ENCODE measurements at regions of chr12 and their contacts with region 1.

Region 1: GRCh38 chr12:26195641-26196420 is 458 bp downstream of the SSPN start:
- DNase-seq: peak; percentile 81
- H3K4me3 ChIP-seq: peak overlapping the region; percentile 42 to 76 (median 72)
- H3K27ac ChIP-seq: peak overlapping the region; percentile 89 to 94 (median 92)
- H3K4me1 ChIP-seq: peaks cover 0 to 45% (median 32%) of the 10 kb centered on the region in 4 donors
- H3K27me3 ChIP-seq: no peaks in the 10 kb centered on the region
- CTCF ChIP-seq: no peak
- EP300 ChIP-seq: no peak
- POLR2A ChIP-seq: no peak

Region 2: GRCh38 chr12:25970916-25971653 is 224.7 kb before region 1 on chr12:
- intact Hi-C with region 1: loop called (anchors 10 kb)
- DNase-seq: no peak
- H3K4me3 ChIP-seq: peak overlapping the region in 1 of 4 donors; percentile 8
- H3K27ac ChIP-seq: peak overlapping the region; percentile 52 to 84 (median 64)
- H3K4me1 ChIP-seq: peaks cover 0 to 98% (median 88%) of the 10 kb centered on the region in 4 donors
- H3K27me3 ChIP-seq: no peaks in the 10 kb centered on the region
- CTCF ChIP-seq: peak in 2 of 4 experiments; percentile 21 to 34
- EP300 ChIP-seq: no peak
- POLR2A ChIP-seq: no peak

Region 3: GRCh38 chr12:26126340-26127284 is 69.2 kb before region 1 on chr12:
- intact Hi-C with region 1: loop called (anchors 2 kb)
- DNase-seq: peak; percentile 96
- H3K4me3 ChIP-seq: peak overlapping the region; percentile 58 to 75 (median 68)
- H3K27ac ChIP-seq: peak overlapping the region; percentile 95 to 99 (median 98)
- H3K4me1 ChIP-seq: peaks cover 0 to 27% (median 19%) of the 10 kb centered on the region in 4 donors
- H3K27me3 ChIP-seq: no peaks in the 10 kb centered on the region
- CTCF ChIP-seq: no peak
- EP300 ChIP-seq: no peak
- POLR2A ChIP-seq: peak in 1 of 2 donors; percentile 10

Region 4: GRCh38 chr12:26156201-26156871 is 39.5 kb before region 1 on chr12:
- intact Hi-C with region 1: loop called (anchors 5 kb)
- DNase-seq: no peak
- H3K4me3 ChIP-seq: no peak overlapping the region
- H3K27ac ChIP-seq: no peak overlapping the region
- H3K4me1 ChIP-seq: peaks cover 0 to 17% (median 15%) of the 10 kb centered on the region in 4 donors
- H3K27me3 ChIP-seq: no peaks in the 10 kb centered on the region
- CTCF ChIP-seq: no peak
- EP300 ChIP-seq: no peak
- POLR2A ChIP-seq: no peak

Region 5: DNA sequence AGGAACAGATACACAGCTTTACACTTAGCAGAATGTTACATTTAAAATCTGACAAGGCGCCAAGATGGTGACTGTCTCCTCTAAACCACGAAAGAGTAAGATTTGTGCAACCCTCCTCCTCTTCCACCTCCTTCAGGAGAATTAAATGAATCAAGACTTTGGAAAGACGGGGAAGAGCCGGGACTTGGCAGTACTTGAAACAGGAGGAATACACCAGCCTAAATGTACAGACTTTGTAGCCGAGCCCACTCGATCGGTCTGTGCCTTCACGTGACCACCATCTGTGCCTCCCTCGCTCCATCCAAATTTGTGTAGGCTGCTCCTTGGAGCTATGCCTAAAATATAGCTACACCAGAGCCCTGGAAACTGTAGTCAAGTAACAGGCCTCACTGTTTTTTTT is 37.8 kb after region 1 on chr12:
- intact Hi-C with region 1: loop called (anchors 5 kb)
- DNase-seq: no peak
- H3K4me3 ChIP-seq: no peak overlapping the region
- H3K27ac ChIP-seq: peak overlapping the region in 2 of 4 donors; percentile 42 to 60
- H3K4me1 ChIP-seq: peaks cover 0 to 16% (median 5%) of the 10 kb centered on the region in 4 donors
- H3K27me3 ChIP-seq: no peaks in the 10 kb centered on the region
- CTCF ChIP-seq: no peak
- EP300 ChIP-seq: no peak
- POLR2A ChIP-seq: no peak

Region 6: GRCh38 chr12:26274441-26275312 is 78.8 kb after region 1 on chr12:
- intact Hi-C with region 1: loop called (anchors 5 kb)
- DNase-seq: peak; percentile 95
- H3K4me3 ChIP-seq: no peak overlapping the region
- H3K27ac ChIP-seq: peak overlapping the region; percentile 77 to 85 (median 84)
- H3K4me1 ChIP-seq: peaks cover 0 to 34% (median 31%) of the 10 kb centered on the region in 4 donors
- H3K27me3 ChIP-seq: no peaks in the 10 kb centered on the region
- CTCF ChIP-seq: no peak
- EP300 ChIP-seq: peak in 1 of 4 donors; percentile 64
- POLR2A ChIP-seq: no peak

Measured in sigmoid colon (tissue), 7 donors.